Activated CD4-positive, alpha-beta memory T cell treated with anti-CD3 and anti-CD28 coated beads for 36 hours (primary cell): ENCODE measurements at regions of chr13 and their contacts with region 1.

Region 1: DNA sequence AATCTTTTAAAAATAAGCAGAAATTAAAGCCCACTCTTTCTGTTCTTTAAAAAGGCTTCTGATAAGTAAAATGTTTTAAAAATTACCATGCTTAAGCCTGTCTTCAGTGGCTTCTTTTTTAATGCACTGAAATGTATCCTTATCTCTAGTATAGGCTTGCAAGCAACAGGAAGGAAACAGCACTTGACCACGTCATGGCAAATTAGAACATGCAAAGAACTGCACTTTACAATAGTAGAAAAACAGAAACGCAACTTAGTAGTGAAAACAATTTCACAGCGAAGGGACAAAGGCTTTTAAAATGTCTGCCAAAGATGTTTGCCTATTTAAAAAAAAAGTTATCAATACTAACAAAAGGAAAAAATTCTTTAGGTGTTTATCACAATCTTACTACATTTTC is 36.3 kb downstream of the ELF1 start:
- DNase-seq: peak; percentile 60
- H3K4me3 Mint-ChIP-seq: peak overlapping the region; percentile 81
- H3K27ac Mint-ChIP-seq: peak overlapping the region; percentile 92
- H3K4me1 Mint-ChIP-seq: peaks cover 61% of the 10 kb centered on the region
- H3K27me3 Mint-ChIP-seq: no peaks in the 10 kb centered on the region

Region 2: GRCh38 chr13:40922437-40923040 is 60.2 kb before region 1 on chr13:
- CTCF ChIA-PET with region 1: no interaction called
- POLR2A ChIA-PET with region 1: interaction called, 3 read pairs
- intact Hi-C with region 1: loop called (anchors 5 kb)
- DNase-seq: no peak
- H3K4me3 Mint-ChIP-seq: peak overlapping the region; percentile 68
- H3K27ac Mint-ChIP-seq: peak overlapping the region; percentile 60
- H3K4me1 Mint-ChIP-seq: peaks cover 15% of the 10 kb centered on the region
- H3K27me3 Mint-ChIP-seq: no peaks in the 10 kb centered on the region

Region 3: DNA sequence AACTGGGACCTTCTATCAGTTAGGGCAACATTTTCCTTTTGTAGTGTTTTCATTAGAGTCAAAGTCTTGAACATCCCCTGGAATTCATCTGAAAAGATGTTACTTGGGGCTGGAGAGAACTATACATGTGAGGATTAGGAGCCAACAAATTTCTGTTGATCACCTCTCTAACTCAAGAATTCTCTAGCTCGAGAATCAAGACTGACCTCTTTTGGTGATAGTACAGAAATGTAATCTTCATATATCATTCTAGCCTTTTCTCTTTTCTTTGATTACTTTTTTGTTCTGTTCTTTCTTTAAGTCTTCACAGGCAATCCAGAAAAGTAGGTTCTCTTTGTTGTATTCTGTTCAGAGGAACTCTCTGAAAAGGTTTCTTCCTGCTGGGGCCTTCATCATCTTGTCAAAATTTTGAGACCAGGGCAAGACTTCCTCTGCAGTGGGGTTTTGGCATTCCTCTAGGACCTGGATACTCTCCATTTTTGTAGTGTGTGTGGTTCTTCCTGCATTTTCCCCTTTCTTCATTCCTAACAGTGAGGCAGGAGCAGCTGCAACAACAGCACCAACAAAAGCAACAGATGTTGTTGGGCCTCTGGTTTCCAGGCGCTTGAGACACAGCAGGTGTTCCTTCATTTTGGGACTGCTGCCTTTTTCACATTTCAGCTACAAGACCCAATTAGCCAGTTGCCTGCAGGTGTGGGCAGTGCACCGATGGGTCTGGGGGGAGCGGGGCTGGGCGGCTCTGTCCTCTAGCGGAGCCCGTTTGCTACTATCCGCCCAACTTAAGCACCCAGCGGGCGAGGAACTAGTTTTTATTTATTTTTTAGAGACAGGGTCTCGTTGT is 10.1 kb after region 1 on chr13:
- CTCF ChIA-PET with region 1: interaction called, 3 read pairs
- POLR2A ChIA-PET with region 1: interaction called, 4 read pairs
- intact Hi-C with region 1: loop called (anchors 1 kb)
- DNase-seq: no peak
- H3K4me3 Mint-ChIP-seq: no peak overlapping the region
- H3K27ac Mint-ChIP-seq: peak overlapping the region; percentile 75
- H3K4me1 Mint-ChIP-seq: peaks cover 72% of the 10 kb centered on the region
- H3K27me3 Mint-ChIP-seq: no peaks in the 10 kb centered on the region

Region 4: GRCh38 chr13:41013835-41014234 is 31.1 kb after region 1 on chr13:
- CTCF ChIA-PET with region 1: interaction called, 5 read pairs
- POLR2A ChIA-PET with region 1: interaction called, 87 read pairs
- intact Hi-C with region 1: loop called (anchors 1 kb)
- DNase-seq: no peak
- H3K4me3 Mint-ChIP-seq: peak overlapping the region; percentile 46
- H3K27ac Mint-ChIP-seq: peak overlapping the region; percentile 97
- H3K4me1 Mint-ChIP-seq: peaks cover 51% of the 10 kb centered on the region
- H3K27me3 Mint-ChIP-seq: no peaks in the 10 kb centered on the region

Region 5: GRCh38 chr13:41061075-41061913 is 78.5 kb after region 1 on chr13 and contains the start of gene WBP4:
- CTCF ChIA-PET with region 1: interaction called, 4 read pairs
- POLR2A ChIA-PET with region 1: interaction called, 8 read pairs
- intact Hi-C with region 1: loop called (anchors 1 kb)
- DNase-seq: peak; percentile 92
- H3K4me3 Mint-ChIP-seq: peak within 1 kb of the TSS; percentile 97
- H3K27ac Mint-ChIP-seq: peak within 1 kb of the TSS; percentile 99
- H3K4me1 Mint-ChIP-seq: peaks cover 44% of the 10 kb centered on the region
- H3K27me3 Mint-ChIP-seq: no peaks in the 10 kb centered on the region
- total RNA-seq, gene WBP4: 12.6 to 13.5 TPM

Region 6: DNA sequence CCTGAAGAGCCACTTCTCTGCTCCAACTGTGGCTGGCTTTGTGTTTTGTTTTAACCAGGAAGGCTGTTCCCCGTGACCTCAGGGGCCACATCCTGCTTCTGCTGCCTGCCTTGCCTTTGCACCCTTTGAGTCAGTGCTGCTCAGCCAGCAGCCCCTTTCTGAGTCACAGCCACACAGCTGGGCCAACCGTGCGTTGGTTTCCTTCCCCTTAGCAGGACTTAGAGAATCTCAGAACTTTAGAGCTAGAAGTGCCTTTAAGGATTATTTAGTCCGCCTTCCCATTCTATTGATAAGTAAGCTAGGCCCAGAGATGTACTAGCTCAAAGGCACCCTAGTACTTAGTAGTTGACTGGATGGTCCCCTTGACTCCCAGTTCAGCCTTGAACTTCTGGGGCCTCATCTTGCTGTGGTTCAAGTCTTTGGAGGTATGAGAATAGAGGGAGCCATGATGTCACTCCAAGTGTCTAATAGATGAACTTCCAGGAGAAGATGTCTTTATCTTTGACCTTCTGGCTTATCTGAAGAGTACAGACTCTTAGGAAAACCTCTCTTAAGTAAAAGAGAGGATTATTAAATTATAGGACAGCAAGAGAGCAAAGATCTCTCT is 482.6 kb after region 1 on chr13:
- CTCF ChIA-PET with region 1: no interaction called
- POLR2A ChIA-PET with region 1: no interaction called
- intact Hi-C with region 1: loop called (anchors 5 kb)
- DNase-seq: peak; percentile 96
- H3K4me3 Mint-ChIP-seq: peak overlapping the region; percentile 66
- H3K27ac Mint-ChIP-seq: peak overlapping the region; percentile 97
- H3K4me1 Mint-ChIP-seq: peaks cover 92% of the 10 kb centered on the region
- H3K27me3 Mint-ChIP-seq: no peaks in the 10 kb centered on the region